ENCODE measurements at regions of chr19 and their contacts with region 1.

Region 1: DNA sequence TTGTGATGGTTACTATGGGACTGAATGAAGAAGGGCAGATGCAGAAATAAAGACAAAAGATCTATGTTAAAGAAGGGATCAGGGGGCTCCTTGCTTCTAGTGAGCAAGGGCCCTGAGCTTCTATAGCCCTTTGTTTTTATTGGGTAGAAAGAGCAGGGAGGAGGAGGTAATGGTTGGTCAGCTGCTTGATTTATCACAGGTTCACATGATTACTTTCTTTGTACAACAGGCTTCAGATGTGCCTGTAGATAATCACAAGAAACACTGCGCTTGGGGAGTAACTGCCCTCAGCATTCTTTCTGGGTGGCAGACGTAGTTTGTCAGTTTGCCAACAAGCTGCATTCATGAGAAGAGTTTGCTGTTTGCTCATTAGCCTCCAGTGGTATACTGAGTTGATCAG is 4.8 kb upstream of the ZNF439 start:
- DNase-seq: no peak

Region 2: GRCh38 chr19:11832253-11832912 is 11.3 kb before region 1 on chr19:
- intact Hi-C with region 1: loop called in 1 of 2 experiments (anchors 1 kb)
- DNase-seq: no peak